ENCODE measurements at regions of chr5 and their contacts with region 1.

Region 1: DNA sequence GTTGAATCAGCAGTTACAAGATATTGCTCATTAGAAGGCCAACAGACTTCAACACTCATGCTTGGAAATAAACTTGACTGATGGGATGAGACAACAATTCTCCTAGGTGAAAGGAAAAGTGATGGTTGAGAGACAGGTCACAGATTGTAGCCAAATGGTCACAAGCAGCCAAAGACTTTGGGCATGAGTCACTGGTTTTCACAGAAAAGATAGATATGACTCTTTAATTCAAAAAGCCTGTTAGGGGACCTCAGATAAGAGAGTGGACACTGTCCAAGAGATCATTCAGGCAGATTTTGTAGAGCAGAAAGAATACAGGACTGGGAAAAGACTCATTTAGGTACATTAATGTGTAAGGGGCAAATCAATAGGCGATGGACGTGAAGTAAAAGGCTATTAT is 982.5 kb downstream of the MAT2B start:
- DNase-seq: no peak
- H3K4me3 ChIP-seq: no peak overlapping the region
- CTCF ChIP-seq: no peak

Region 2: GRCh38 chr5:163692091-163692490 is 795.8 kb before region 1 on chr5:
- in situ Hi-C with region 1: loop called (anchors 5 kb)
- DNase-seq: no peak
- H3K4me3 ChIP-seq: no peak overlapping the region
- CTCF ChIP-seq: no peak

Region 3: DNA sequence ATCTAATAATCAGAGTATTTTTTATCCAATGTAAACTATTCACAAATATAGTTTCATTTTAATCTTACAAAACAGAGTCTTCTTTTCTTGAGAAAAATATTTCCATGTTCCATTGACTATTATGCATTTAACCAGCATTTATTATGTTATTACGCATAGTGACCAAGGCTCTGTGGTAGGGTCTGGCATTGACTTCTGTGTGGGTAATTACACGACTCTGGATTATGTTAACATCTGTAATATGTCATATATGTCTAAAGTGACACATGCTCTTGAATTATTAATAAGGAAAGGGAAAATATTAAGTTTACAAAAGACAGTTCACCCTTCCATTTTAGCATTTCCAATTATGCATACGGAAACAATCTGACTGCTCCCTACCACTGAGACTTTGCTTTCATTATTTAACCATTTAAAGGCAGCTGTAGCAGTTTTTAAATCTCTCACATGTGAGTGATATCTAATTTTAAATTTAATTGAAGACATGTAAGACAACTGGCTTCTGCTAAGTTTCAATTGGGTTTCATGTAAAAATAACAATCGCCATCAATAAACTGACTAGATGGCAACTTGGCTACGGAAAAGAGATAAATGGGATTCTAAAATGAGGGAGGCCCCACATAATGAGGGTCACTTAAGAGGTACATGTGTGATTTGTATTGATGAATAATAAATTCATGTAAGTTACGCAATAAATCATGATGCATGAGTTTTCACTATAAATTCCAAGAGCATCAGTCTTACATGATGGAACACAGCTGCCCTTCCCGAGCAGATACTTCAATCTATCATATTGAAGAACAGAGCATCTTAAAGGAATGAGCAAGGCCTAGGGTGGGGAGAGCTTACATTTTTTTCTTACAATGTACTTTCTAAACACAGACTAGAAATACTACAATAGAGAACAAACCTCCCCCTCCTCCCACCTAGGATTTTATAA is 74.3 kb after region 1 on chr5:
- in situ Hi-C with region 1: no loop called
- DNase-seq: no peak
- H3K4me3 ChIP-seq: no peak overlapping the region
- CTCF ChIP-seq: no peak

Region 4: GRCh38 chr5:164600274-164600673 is 112.3 kb after region 1 on chr5:
- in situ Hi-C with region 1: no loop called
- DNase-seq: no peak
- H3K4me3 ChIP-seq: no peak overlapping the region
- CTCF ChIP-seq: no peak

Measured in astrocyte of the cerebellum (primary cell).